Activated CD4-positive, alpha-beta memory T cell treated with anti-CD3 and anti-CD28 coated beads, Interleukin-2, amount 10 ng/mL, durations not matched to agents 7 days and 5 days (primary cell): ENCODE measurements at regions of chr9 and their contacts with region 1.

Region 1: GRCh38 chr9:99104459-99105151 is at the start of gene TGFBR1:
- DNase-seq: peak; percentile 96
- H3K4me3 Mint-ChIP-seq: peak within 1 kb of the TSS; percentile 85
- H3K27ac Mint-ChIP-seq: peak within 1 kb of the TSS; percentile 93
- H3K4me1 Mint-ChIP-seq: peaks cover 73% of the 10 kb centered on the region
- H3K27me3 Mint-ChIP-seq: no peaks in the 10 kb centered on the region
- total RNA-seq, gene TGFBR1: 57.4 to 58.5 TPM

Region 2: DNA sequence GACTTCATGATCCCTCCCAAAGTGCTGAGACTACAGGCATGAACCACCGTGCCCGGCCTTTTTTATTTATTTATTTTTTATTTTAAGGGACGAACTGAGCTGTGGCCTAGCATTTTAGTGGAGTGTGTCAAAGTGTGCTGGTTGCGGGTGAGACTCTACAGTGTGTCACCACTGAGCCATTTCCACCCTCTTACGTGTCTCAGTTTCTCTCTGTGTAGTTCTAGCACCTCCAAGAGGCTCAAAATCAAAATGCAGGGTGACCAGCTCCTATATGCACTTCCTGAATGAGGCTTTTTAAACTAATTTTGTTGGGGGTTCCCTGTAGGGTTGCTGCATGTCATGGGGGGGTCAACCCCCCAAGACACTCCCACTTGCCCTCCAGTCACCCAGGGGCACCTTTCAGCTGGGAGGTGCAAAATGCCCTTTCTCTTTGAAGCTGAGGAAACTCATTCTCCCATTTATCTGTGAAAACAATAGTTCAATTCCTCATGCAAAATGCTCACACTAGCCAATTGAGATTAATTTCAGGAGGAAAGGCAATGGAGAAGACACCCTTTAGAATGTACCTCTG is 91.6 kb before region 1 on chr9:
- CTCF ChIA-PET with region 1: interaction called, 7 read pairs
- POLR2A ChIA-PET with region 1: interaction called, 20 read pairs
- DNase-seq: no peak
- H3K4me3 Mint-ChIP-seq: no peak overlapping the region
- H3K27ac Mint-ChIP-seq: peak overlapping the region; percentile 68
- H3K4me1 Mint-ChIP-seq: peaks cover 16% of the 10 kb centered on the region
- H3K27me3 Mint-ChIP-seq: no peaks in the 10 kb centered on the region

Region 3: DNA sequence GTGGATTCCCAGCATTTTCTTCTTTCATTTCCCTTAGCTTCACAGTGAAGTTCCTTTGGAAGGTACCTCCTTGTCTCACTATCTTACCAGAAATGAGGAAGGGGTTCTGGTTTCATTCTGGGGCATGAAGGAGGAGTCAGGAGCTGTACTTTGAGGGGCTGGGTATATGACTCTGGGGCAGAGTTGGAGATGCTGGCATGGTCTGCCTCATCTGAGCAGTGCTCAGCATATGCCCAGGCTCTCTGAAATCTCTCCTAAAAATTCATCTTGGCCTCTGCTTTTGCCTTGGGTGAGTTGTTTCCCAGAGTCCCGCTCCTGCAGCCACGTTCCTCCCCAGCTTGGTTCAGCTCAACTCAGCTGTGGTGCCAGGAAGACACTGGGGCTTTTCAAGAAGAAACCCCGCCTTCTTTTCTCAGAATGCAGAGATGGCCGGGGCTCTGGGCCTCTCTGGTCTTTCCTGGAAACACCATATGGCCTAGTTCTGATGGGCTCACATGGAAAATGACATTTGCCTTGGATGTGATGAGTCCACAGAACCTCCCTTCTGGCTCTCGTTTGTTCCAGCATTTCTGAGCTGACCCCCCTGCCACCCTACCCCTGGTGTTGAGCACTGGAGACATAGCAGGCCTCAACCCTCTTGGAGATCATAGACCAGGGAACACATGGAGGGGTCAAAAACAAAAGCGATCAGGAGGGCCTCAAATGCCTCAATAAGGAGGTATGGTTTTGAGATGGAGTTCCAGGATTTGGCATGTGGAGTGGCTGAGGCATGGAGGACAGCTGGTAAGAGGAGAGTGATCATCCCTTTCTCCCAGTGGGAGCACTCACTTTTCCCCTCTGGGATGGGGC is 11.7 kb before region 1 on chr9:
- CTCF ChIA-PET with region 1: interaction called, 57 read pairs
- POLR2A ChIA-PET with region 1: interaction called, 166 read pairs
- DNase-seq: peak; percentile 83
- H3K4me3 Mint-ChIP-seq: peak overlapping the region; percentile 41
- H3K27ac Mint-ChIP-seq: peak overlapping the region; percentile 100
- H3K4me1 Mint-ChIP-seq: peaks cover 68% of the 10 kb centered on the region
- H3K27me3 Mint-ChIP-seq: no peaks in the 10 kb centered on the region

Region 4: DNA sequence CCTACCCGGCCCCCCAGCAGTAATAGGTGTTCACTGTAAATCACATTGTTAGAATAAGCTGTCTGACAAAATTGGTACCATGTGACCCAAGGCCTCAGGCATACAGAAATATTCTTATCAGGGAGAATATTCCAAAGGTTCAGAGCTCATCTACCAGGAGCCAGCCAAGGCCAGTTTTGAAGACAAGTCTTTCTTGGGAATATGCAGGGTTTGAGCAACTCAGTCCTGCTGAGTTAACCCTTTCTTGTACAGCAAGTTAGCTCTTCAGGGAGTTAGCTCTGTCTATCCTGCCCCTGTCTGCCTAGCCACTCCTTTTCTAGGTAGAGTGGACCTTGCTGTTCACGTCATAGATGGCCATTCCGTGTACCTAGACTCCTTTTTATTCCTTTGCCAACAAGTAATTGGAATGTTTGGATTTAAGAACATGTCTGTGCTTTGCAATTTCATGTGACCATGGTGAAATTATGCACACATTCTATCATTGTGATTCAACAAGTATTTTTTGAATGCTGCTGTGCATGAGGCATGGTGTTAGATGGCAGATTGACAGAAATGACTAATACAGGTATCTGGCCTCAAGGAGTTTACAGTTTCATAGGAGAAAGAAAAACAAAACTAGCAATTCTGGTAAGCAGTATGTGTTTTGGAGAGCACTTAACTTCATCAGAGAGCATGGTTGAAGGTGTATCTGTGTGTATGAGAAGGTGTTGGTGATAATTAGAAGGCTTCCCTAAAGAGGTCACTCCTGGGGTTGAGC is 22.9 kb after region 1 on chr9:
- CTCF ChIA-PET with region 1: interaction called, 4 read pairs
- POLR2A ChIA-PET with region 1: interaction called, 17 read pairs
- DNase-seq: no peak
- H3K4me3 Mint-ChIP-seq: no peak overlapping the region
- H3K27ac Mint-ChIP-seq: no peak overlapping the region
- H3K4me1 Mint-ChIP-seq: peaks cover 53% of the 10 kb centered on the region
- H3K27me3 Mint-ChIP-seq: no peaks in the 10 kb centered on the region

Region 5: GRCh38 chr9:99173570-99174504 is 69.2 kb after region 1 on chr9:
- CTCF ChIA-PET with region 1: no interaction called
- POLR2A ChIA-PET with region 1: no interaction called
- DNase-seq: no peak
- H3K4me3 Mint-ChIP-seq: no peak overlapping the region
- H3K27ac Mint-ChIP-seq: no peak overlapping the region
- H3K4me1 Mint-ChIP-seq: peaks cover 4% of the 10 kb centered on the region
- H3K27me3 Mint-ChIP-seq: peaks cover 2% of the 10 kb centered on the region